Activated CD4-positive, alpha-beta memory T cell treated with anti-CD3 and anti-CD28 coated beads for 36 hours (primary cell): ENCODE measurements at regions of chr14 and their contacts with region 1.

Region 1: GRCh38 chr14:77301103-77301502 is 19.6 kb downstream of the POMT2 start:
- DNase-seq: peak; percentile 78
- H3K4me3 Mint-ChIP-seq: no peak overlapping the region
- H3K27ac Mint-ChIP-seq: no peak overlapping the region
- H3K4me1 Mint-ChIP-seq: peaks cover 24% of the 10 kb centered on the region
- H3K27me3 Mint-ChIP-seq: no peaks in the 10 kb centered on the region

Region 2: GRCh38 chr14:77124345-77125280 is 176.5 kb before region 1 on chr14:
- CTCF ChIA-PET with region 1: interaction called, 4 read pairs
- POLR2A ChIA-PET with region 1: interaction called, 5 read pairs
- intact Hi-C with region 1: loop called (anchors 5 kb)
- DNase-seq: peak; percentile 77
- H3K4me3 Mint-ChIP-seq: peak overlapping the region; percentile 82
- H3K27ac Mint-ChIP-seq: peak overlapping the region; percentile 73
- H3K4me1 Mint-ChIP-seq: peaks cover 50% of the 10 kb centered on the region
- H3K27me3 Mint-ChIP-seq: peaks cover 2% of the 10 kb centered on the region

Region 3: GRCh38 chr14:77376771-77377501 is 75.8 kb after region 1 on chr14 and contains the starts of genes SAMD15 and TMED8:
- CTCF ChIA-PET with region 1: interaction called, 7 read pairs
- POLR2A ChIA-PET with region 1: interaction called, 4 read pairs
- intact Hi-C with region 1: loop called (anchors 1 kb)
- DNase-seq: peak; percentile 88
- H3K4me3 Mint-ChIP-seq: peak within 1 kb of the TSS; percentile 92
- H3K27ac Mint-ChIP-seq: peak within 1 kb of the TSS; percentile 82
- H3K4me1 Mint-ChIP-seq: peaks cover 42% of the 10 kb centered on the region
- H3K27me3 Mint-ChIP-seq: no peaks in the 10 kb centered on the region
- total RNA-seq, gene SAMD15: 0.38 TPM in 1 of 2 experiments, not detected in the other
- total RNA-seq, gene TMED8: 26.9 to 27.8 TPM

Region 4: DNA sequence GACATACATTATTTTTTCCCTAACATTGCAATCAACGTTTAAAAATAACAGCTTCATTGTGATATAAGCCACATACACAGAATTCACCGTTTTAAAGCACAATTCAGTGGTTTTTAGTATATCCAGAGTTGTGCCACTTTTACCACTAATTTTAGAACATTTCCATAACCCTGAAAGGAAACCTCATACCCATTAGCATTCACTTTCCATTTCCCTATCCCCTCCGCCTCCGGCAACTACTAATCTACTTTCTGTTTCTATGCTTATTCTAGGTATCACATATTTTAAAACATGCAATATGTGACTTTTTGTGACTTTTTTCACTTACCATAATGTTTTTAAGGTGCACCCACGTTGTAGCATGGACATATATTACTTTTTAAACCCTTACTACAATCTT is 253.1 kb after region 1 on chr14:
- CTCF ChIA-PET with region 1: interaction called, 3 read pairs
- POLR2A ChIA-PET with region 1: no interaction called
- intact Hi-C with region 1: loop called (anchors 2 kb)
- DNase-seq: no peak
- H3K4me3 Mint-ChIP-seq: no peak overlapping the region
- H3K27ac Mint-ChIP-seq: peak overlapping the region; percentile 18
- H3K4me1 Mint-ChIP-seq: peaks cover 9% of the 10 kb centered on the region
- H3K27me3 Mint-ChIP-seq: no peaks in the 10 kb centered on the region